Upper lobe of right lung (tissue), 1 donor: ENCODE measurements at regions of chr4 and their contacts with region 1.

Region 1: DNA sequence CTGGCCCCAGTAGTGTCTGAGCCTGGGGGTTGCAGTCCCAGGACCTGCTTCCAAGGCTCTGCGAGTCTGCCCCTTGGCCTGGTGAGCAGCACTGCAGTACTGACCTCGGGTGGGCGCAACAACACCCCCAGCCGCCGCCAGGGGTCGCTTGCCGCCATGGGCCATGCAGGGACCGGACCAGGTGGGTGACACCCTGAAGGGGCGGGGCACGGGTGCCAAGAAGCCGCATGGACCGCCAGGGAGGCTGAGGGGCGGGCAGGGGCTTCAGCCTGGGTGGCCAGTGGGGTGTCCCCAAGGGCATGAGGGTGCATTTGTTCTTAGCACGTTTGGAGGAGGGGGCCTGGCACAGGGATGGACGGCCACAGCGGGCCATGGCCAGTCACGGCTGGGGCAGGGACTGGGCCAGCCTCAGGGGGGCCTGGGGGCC is 25.0 kb downstream of the TACC3 start:
- DNase-seq: peak; percentile 86
- ATAC-seq: peak; percentile 69
- H3K4me3 ChIP-seq: no peak overlapping the region
- H3K27ac ChIP-seq: no peak overlapping the region
- H3K4me1 ChIP-seq: peaks cover 4% of the 10 kb centered on the region
- H3K27me3 ChIP-seq: no peaks in the 10 kb centered on the region
- CTCF ChIP-seq: peak; percentile 72

Region 2: DNA sequence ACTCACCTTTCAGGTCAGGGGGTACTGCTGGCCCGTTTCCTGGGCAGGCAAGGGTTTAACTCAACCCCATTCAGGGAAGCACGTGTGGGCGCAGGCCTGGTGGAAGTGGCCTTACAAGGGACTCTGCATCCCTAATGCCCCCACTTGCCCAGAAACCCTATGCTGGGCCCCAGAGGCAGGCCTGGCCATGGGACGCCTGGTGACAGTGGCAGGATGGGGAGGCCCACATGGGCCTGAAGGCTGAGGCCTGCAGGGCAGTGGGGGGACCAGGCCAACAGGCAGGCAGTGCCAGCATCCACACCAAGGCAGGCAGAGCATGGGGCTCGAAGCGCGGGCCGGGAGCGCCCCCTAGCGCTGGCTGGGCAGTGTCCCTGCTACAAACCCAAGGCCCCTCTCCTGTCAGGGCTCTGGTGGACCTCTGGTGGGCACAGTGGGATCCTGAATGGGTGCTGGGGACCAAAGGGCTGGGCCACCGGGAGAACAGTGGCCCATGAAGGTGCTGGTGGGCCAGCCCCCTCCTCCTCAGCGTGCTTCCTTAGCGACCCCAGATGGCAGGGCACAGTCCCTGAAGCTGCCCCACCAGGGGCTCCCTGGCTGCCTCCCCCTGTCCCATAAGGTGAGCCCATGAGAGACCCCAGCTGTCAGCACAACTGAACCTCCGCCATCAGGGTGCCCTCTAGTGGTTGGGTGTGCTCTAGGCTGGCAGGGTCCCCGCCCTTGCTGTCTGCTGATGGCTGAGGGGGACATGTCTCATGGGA is 63.7 kb after region 1 on chr4:
- intact Hi-C with region 1: loop called (anchors 5 kb)
- DNase-seq: peak; percentile 86
- ATAC-seq: peak; percentile 83
- H3K4me3 ChIP-seq: no peak overlapping the region
- H3K27ac ChIP-seq: no peak overlapping the region
- H3K4me1 ChIP-seq: peaks cover 8% of the 10 kb centered on the region
- H3K27me3 ChIP-seq: no peaks in the 10 kb centered on the region
- CTCF ChIP-seq: peak; percentile 77

Region 3: DNA sequence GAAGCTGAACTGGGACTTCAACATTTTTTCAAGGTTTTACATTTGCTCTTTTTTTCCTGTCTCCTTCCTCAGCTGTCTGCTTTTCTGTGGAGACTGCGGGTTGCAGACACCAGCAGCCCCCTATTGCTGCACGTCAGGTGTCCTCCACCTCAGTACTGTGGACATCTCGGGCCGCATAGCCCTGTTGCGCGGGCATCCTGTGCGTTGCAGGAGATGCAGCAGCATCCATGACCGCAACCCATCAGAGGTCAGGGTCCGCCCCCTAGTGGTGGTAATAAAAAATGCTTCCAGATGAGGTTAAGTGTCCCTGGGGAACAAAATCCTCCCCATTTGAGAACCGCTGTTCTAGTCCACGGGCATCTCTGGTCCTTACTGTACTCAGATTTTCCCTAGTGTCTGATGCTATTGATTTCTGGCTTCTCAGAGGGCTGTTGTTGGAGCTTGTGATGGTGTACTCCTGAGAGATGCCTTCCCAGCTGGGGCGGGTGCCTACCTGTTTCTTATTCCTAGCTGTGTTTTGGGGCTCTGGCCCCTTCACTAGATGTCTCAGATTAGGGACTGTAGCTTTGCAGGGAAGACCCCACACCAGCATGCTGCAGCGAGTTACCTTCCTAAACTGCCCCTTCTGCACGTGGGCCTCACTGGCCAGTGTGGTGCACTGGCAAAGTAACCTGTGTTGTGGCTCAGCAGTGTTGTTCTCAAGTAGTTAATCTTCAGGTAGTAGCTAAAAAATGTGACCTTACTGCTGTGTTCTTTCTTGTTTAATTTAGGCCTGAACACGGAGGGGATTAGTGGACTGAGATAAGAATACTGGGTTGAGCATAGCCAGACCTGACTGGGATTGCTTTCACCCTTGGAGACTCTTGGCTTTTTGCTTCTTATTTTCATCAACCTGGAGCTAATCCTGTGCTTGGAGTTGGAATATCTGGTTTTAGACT is 153.1 kb after region 1 on chr4:
- intact Hi-C with region 1: loop called (anchors 10 kb)
- DNase-seq: peak; percentile 80
- ATAC-seq: peak; percentile 92
- H3K4me3 ChIP-seq: no peak overlapping the region
- H3K27ac ChIP-seq: no peak overlapping the region
- H3K4me1 ChIP-seq: no peaks in the 10 kb centered on the region
- H3K27me3 ChIP-seq: no peaks in the 10 kb centered on the region
- CTCF ChIP-seq: peak; percentile 88